HCT116 (cell line): ENCODE measurements at regions of chr3 and their contacts with region 1.

Region 1: DNA sequence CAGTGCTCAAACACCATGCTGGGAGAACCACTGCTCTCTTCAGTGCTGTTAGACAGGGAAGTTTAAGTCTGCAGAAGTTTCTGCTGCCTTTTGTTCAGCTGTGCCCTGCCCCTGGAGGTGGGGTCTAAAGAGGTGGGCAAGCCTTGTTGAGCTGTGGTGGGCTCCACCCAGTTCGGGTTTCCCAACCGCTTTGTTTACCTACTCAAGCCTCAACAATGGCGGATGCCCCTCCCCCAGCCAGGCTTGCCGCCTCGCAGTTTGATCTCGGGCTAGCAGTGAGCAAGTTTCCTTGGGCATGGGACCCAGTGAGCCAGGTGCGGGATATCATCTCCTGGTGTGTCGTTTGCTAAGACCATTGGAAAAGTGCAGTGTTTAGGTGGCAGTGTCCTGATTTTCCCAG is 670.2 kb upstream of the ALCAM start:
- DNase-seq: no peak
- ATAC-seq: no peak
- H3K4me3 ChIP-seq: no peak overlapping the region
- H3K27ac ChIP-seq: no peak overlapping the region
- H3K4me1 ChIP-seq: no peaks in the 10 kb centered on the region
- H3K27me3 ChIP-seq: no peaks in the 10 kb centered on the region
- CTCF ChIP-seq: no peak
- POLR2A ChIP-seq: no peak
- RAD21 ChIP-seq: no peak

Region 2: DNA sequence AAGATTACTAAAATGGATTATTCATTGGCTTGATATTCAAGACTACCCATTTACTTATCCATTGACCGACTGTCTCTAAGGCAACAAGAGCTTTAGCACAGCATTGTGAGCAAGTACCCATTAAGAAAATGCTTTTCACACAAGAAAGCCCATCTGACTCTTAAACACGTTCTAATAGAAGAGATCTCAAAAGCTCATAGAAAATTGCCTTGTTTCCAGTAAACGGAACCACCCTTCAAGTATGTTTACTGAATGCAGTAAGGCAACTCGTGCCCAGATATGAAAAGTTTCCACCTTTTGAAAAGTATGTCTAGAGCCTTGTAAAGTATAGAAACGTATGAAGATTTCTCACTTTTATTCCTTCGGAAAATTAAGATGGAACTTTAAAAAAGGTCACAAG is 14.9 kb after region 1 on chr3:
- CTCF ChIA-PET with region 1: no interaction called
- POLR2A ChIA-PET with region 1: no interaction called
- RAD21 ChIA-PET with region 1: no interaction called
- intact Hi-C with region 1: loop called (anchors 1 kb)
- DNase-seq: no peak
- ATAC-seq: no peak
- H3K4me3 ChIP-seq: no peak overlapping the region
- H3K27ac ChIP-seq: no peak overlapping the region
- H3K4me1 ChIP-seq: no peaks in the 10 kb centered on the region
- H3K27me3 ChIP-seq: no peaks in the 10 kb centered on the region
- CTCF ChIP-seq: no peak
- POLR2A ChIP-seq: no peak
- RAD21 ChIP-seq: no peak